Aorta (tissue), 5 donors: ENCODE measurements at regions of chr2 and their contacts with region 1.

Region 1: DNA sequence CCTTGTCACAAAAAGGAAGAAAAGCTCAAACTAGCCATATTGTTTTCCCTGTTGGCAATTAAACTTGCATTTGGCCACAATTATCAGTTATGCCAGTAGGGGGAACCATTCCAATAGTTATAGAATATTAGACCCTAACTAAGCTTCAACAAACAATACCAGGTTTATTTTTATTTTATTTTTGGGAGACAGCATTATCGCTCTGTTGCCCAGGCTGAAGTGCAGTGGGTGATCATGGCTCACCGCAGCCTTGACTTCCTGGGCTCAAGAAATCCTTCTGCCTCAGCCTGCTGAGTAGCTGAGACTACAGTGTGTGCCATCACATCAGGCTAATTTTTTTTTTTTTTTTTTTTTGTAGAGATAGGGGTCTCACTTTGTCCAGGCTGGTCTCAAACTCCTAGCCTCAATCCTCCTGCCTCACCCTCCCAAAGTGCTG is 102.1 kb downstream of the ATAD2B start:
- DNase-seq: no peak
- ATAC-seq: peak; percentile 57
- H3K4me3 ChIP-seq: no peak overlapping the region
- H3K27ac ChIP-seq: no peak overlapping the region
- H3K4me1 ChIP-seq: no peaks in the 10 kb centered on the region
- H3K27me3 ChIP-seq: no peaks in the 10 kb centered on the region

Region 2: GRCh38 chr2:23900927-23901322 is 76.1 kb after region 1 on chr2:
- intact Hi-C with region 1: no loop called
- DNase-seq: no peak
- ATAC-seq: peak; percentile 60
- H3K4me3 ChIP-seq: no peak overlapping the region
- H3K27ac ChIP-seq: no peak overlapping the region
- H3K4me1 ChIP-seq: peaks cover 0 to 2% of the 10 kb centered on the region in 2 donors
- H3K27me3 ChIP-seq: no peaks in the 10 kb centered on the region

Region 3: DNA sequence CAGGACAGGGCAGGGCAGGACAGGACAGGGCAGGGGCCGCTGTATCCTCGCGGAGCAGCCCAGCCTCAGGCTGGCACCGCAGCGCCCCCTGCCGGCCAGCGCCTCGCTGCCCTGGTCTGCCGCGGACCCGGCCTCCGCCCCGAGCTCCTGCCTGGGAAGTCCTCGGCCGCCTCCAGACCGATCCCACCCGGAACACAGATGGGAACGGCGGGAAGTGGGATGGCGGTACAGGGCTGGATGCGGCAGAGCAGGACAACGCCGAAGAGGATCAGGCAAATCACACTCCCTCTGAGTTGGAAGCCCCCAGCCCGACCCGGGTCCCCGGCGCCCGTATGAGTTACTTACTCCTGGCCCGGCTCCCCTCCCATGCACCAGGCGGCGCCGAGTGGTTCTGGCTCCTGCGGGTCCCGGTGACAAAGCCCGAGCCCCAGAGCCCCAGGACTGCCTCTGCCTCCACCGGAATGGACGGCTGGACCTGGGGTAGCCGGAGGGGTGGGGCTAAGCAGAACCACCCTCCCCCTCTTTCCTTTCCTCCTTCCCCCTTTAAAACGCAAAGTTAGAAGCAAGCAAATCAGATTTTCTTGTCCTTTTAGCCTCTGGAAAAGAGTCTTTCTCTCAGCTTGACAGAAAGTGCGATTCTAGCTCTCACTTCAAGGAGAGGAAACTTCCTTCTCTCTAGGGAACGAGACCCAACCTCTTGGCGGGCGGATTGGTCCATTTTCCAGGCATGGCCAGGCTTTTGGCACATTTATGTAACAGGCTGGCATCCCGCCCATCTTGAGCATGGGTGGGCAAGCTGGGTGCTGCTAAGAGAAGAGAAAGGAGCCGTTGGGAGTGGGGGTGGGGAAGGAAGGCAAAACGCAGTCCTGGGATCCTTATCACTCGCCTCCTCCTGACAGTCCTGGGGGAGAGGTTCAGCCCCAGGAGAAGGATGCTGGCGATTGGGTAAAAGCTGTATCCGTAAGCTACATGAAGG is 259.9 kb after region 1 on chr2 and contains the start of gene TP53I3:
- intact Hi-C with region 1: loop called (anchors 10 kb)
- DNase-seq: peak; percentile 92 to 96
- ATAC-seq: peak; percentile 98
- H3K4me3 ChIP-seq: peak within 1 kb of the TSS; percentile 29 to 42
- H3K27ac ChIP-seq: peak within 1 kb of the TSS; percentile 46 to 47
- H3K4me1 ChIP-seq: no peaks in the 10 kb centered on the region
- H3K27me3 ChIP-seq: no peaks in the 10 kb centered on the region
- total RNA-seq, gene TP53I3: 7.3 to 21.0 TPM

Region 4: GRCh38 chr2:24214880-24215279 is 390.1 kb after region 1 on chr2:
- intact Hi-C with region 1: no loop called
- DNase-seq: no peak
- ATAC-seq: no peak
- H3K4me3 ChIP-seq: no peak overlapping the region
- H3K27ac ChIP-seq: no peak overlapping the region
- H3K4me1 ChIP-seq: no peaks in the 10 kb centered on the region
- H3K27me3 ChIP-seq: no peaks in the 10 kb centered on the region